B cell (primary cell): ENCODE measurements at regions of chr9 and their contacts with region 1.

Region 1: DNA sequence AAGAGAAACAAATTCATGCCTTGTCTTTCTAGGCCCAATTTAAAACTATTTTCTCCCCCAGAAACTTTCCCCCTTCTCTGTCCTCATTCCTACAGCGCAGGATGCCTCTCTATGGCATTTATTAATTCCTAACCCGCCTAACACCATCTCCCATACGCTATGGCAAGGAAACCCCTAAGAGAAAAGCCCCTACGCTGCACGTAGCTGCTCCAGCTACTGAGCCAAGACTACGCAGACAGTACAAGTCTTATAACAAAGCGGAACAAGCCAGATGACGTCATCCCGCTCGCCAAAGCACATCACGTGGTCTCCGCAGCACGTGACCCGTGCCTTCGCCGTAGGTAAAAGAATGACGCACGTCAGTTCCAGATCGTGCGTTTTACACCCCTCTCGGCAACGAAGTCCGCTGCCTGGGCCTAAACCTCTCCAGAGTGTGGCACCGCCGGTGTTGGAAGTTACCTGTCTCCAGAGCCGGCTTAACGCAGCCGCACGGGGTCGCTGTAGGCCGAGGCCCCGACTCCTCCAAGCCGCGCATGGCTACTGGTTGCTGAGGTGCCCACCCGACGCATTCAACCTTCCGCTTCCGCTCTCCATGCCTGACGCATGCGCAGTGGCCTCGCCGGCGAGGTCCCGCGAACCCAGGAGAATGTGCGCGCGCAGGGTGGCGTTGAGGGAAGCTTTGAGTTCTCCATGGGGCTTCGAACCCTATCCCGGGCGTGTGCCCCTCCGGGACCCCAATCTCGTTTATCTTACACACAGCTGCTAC is at the start of gene TRMO:
- DNase-seq: peak; percentile 100
- ATAC-seq: peak; percentile 78
- H3K4me3 ChIP-seq: peak within 1 kb of the TSS; percentile 47 to 89 (median 77)
- H3K4me3 Mint-ChIP-seq: peak within 1 kb of the TSS; percentile 87
- H3K27ac ChIP-seq: peak within 1 kb of the TSS; percentile 98 to 99
- H3K27ac Mint-ChIP-seq: peak within 1 kb of the TSS; percentile 97
- H3K4me1 ChIP-seq: peaks cover 26 to 32% of the 10 kb centered on the region in 2 donors
- H3K4me1 Mint-ChIP-seq: peaks cover 54% of the 10 kb centered on the region
- H3K27me3 ChIP-seq: no peaks in the 10 kb centered on the region
- H3K27me3 Mint-ChIP-seq: no peaks in the 10 kb centered on the region
- CTCF ChIP-seq: peak; percentile 74
- total RNA-seq, gene TRMO: 40.2 and 42.3 TPM in 2 replicates

Region 2: DNA sequence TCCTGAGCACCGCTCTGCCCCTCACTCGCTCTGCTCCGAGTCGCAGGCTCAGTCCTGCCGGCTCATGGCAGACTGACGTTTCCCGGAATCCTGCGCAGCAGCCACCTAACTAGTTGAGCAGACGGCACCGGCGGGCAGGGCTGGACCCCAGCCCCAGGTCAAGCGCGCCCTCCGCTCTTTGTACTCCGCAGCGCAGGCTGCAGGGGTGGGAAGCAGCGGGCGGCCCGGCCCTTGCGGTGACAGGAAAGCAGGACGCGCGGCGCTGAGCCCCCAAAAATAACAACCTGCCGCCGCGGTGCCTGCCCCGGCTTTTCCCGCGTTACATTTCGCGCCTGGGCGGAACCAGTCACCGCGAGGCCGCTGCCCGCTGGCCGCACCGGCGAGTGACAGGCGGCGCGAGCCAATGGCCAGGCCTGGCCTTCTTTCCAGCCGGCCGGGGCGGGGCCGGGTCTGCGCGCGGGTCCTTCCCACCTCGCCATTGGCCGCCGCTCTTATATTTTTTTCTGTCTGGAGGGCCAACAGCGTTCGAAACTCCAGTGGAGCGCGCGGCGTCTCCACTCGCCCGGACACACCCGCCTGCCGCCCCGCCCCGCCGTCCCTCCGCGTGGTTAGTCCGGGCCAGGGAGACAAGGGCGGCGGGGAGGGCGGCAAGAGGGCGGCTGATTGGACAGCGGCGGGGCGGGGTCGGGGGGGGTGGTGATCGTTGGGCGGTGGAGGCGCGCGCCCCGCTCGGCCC is 1503.9 kb before region 1 on chr9 and contains the start of gene ZNF367:
- CTCF ChIA-PET with region 1: no interaction called
- POLR2A ChIA-PET with region 1: no interaction called
- intact Hi-C with region 1: loop called (anchors 5 kb)
- DNase-seq: peak; percentile 95
- ATAC-seq: peak; percentile 73
- H3K4me3 ChIP-seq: peak within 1 kb of the TSS; percentile 53 to 100 (median 92)
- H3K4me3 Mint-ChIP-seq: peak within 1 kb of the TSS; percentile 97
- H3K27ac ChIP-seq: peak within 1 kb of the TSS; percentile 91 to 95
- H3K27ac Mint-ChIP-seq: peak within 1 kb of the TSS; percentile 97
- H3K4me1 ChIP-seq: peaks cover 36 to 47% of the 10 kb centered on the region in 2 donors
- H3K4me1 Mint-ChIP-seq: peaks cover 39% of the 10 kb centered on the region
- H3K27me3 ChIP-seq: no peaks in the 10 kb centered on the region
- H3K27me3 Mint-ChIP-seq: no peaks in the 10 kb centered on the region
- CTCF ChIP-seq: no peak
- total RNA-seq, gene ZNF367: 1.7 and 2.2 TPM in 2 replicates

Region 3: DNA sequence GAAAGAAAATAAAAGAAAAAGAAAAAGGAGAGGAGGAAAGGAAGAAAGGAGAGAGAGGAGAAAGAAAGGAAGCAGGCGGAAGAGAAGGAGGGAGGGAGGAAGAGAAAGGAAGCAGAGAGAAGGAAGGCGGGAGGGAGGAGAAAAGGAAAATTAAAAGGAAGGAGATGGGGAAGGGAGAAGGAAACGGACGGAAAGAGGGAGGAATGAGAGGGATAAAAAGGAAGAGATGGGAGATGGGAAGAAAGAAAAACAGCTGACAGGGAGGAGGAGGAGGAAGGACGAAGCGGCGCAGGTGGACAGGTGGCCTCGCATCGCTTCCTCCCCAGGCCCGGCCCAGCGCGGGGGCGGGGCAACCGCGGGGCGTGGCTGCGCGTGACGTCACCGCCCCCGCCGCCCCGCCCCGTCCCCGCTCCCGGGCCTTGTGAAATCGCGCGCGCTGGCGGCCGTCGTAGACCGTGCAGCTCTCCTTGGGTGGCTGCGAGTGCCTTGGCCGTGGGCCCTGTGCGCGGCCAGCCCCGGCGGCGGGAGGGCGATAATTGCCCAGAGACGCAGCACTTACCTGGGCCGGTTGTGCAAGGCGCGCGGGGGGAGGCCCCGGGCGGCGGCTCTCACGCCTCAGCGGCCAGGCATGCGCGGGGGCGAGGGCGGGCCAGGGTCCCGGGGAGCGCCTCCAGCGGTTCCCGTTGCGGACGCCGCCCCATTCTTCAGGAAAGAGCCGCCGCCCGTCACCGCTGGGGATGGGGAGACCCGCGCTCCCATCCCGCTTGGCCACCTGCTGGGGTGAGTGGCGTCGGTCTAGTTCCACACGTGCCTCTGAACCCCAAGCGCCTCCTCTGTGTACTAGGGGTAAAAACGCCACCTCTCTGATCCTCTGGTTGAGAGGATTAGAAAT is 118.7 kb before region 1 on chr9:
- CTCF ChIA-PET with region 1: no interaction called
- POLR2A ChIA-PET with region 1: no interaction called
- intact Hi-C with region 1: loop called (anchors 1 kb)
- DNase-seq: peak; percentile 84
- ATAC-seq: peak; percentile 94
- H3K4me3 ChIP-seq: peak overlapping the region in 4 of 5 experiments; percentile 36 to 64 (median 56)
- H3K4me3 Mint-ChIP-seq: peak overlapping the region; percentile 87
- H3K27ac ChIP-seq: no peak overlapping the region
- H3K27ac Mint-ChIP-seq: peak overlapping the region; percentile 20
- H3K4me1 ChIP-seq: peaks cover 7 to 9% of the 10 kb centered on the region in 2 donors
- H3K4me1 Mint-ChIP-seq: peaks cover 10% of the 10 kb centered on the region
- H3K27me3 ChIP-seq: peaks cover 0 to 20% (median 7%) of the 10 kb centered on the region in 4 experiments
- H3K27me3 Mint-ChIP-seq: peaks cover 30% of the 10 kb centered on the region
- CTCF ChIP-seq: peak; percentile 16

Region 4: DNA sequence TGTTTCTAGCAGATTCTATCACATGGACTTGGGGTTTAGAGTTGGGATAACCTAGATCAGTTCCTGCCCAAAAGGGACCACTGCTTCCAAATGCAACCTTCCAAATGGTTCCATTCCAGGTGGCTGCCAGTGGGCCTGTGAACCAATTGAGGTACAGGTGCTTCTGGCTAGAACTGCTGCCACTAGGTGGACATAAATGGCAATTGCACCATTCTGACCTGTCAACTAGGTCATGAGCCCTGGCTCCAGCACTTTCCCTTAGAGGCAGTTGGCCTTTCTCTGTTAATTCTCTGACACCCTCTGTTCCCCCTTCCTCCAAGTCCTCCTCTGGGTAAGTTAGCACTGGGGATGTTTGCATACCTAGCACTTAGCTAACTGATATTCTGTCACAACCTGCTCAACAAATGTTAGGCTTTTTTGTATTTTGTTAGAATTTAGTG is 32.4 kb after region 1 on chr9:
- CTCF ChIA-PET with region 1: interaction called, 50 read pairs
- POLR2A ChIA-PET with region 1: interaction called, 13 read pairs
- intact Hi-C with region 1: loop called (anchors 1 kb)
- DNase-seq: peak; percentile 68
- ATAC-seq: peak; percentile 73
- H3K4me3 ChIP-seq: no peak overlapping the region
- H3K4me3 Mint-ChIP-seq: no peak overlapping the region
- H3K27ac ChIP-seq: no peak overlapping the region
- H3K27ac Mint-ChIP-seq: no peak overlapping the region
- H3K4me1 ChIP-seq: no peaks in the 10 kb centered on the region
- H3K4me1 Mint-ChIP-seq: no peaks in the 10 kb centered on the region
- H3K27me3 ChIP-seq: peaks cover 0 to 6% (median 3%) of the 10 kb centered on the region in 4 experiments
- H3K27me3 Mint-ChIP-seq: peaks cover 15% of the 10 kb centered on the region
- CTCF ChIP-seq: peak; percentile 76

Region 5: GRCh38 chr9:98034593-98035546 is 112.7 kb after region 1 on chr9:
- CTCF ChIA-PET with region 1: interaction called, 45 read pairs
- POLR2A ChIA-PET with region 1: no interaction called
- intact Hi-C with region 1: loop called (anchors 1 kb)
- DNase-seq: peak; percentile 91
- ATAC-seq: peak; percentile 87
- H3K4me3 ChIP-seq: peak overlapping the region in 1 of 5 experiments; percentile 38
- H3K4me3 Mint-ChIP-seq: peak overlapping the region; percentile 53
- H3K27ac ChIP-seq: peak overlapping the region; percentile 1 to 34
- H3K27ac Mint-ChIP-seq: peak overlapping the region; percentile 57
- H3K4me1 ChIP-seq: peaks cover 10 to 25% of the 10 kb centered on the region in 2 donors
- H3K4me1 Mint-ChIP-seq: peaks cover 37% of the 10 kb centered on the region
- H3K27me3 ChIP-seq: no peaks in the 10 kb centered on the region
- H3K27me3 Mint-ChIP-seq: no peaks in the 10 kb centered on the region
- CTCF ChIP-seq: peak; percentile 78

Region 6: GRCh38 chr9:98192503-98193335 is 270.6 kb after region 1 on chr9 and contains the start of gene CORO2A:
- CTCF ChIA-PET with region 1: no interaction called
- POLR2A ChIA-PET with region 1: no interaction called
- intact Hi-C with region 1: loop called (anchors 2 kb)
- DNase-seq: peak; percentile 73
- ATAC-seq: peak; percentile 91
- H3K4me3 ChIP-seq: peak within 1 kb of the TSS; percentile 34 to 77 (median 67)
- H3K4me3 Mint-ChIP-seq: peak within 1 kb of the TSS; percentile 91
- H3K27ac ChIP-seq: no peak within 1 kb of the TSS
- H3K27ac Mint-ChIP-seq: peak within 1 kb of the TSS; percentile 71
- H3K4me1 ChIP-seq: peaks cover 8 to 18% of the 10 kb centered on the region in 2 donors
- H3K4me1 Mint-ChIP-seq: peaks cover 10% of the 10 kb centered on the region
- H3K27me3 ChIP-seq: peaks cover 0 to 12% (median 2%) of the 10 kb centered on the region in 4 experiments
- H3K27me3 Mint-ChIP-seq: no peaks in the 10 kb centered on the region
- CTCF ChIP-seq: peak; percentile 23
- total RNA-seq, gene CORO2A: 2.0 TPM in 2 replicates

Region 7: GRCh38 chr9:98215821-98216220 is 293.7 kb after region 1 on chr9:
- CTCF ChIA-PET with region 1: no interaction called
- POLR2A ChIA-PET with region 1: no interaction called
- intact Hi-C with region 1: no loop called
- DNase-seq: peak; percentile 22
- ATAC-seq: no peak
- H3K4me3 ChIP-seq: no peak overlapping the region
- H3K4me3 Mint-ChIP-seq: no peak overlapping the region
- H3K27ac ChIP-seq: no peak overlapping the region
- H3K27ac Mint-ChIP-seq: no peak overlapping the region
- H3K4me1 ChIP-seq: no peaks in the 10 kb centered on the region
- H3K4me1 Mint-ChIP-seq: no peaks in the 10 kb centered on the region
- H3K27me3 ChIP-seq: no peaks in the 10 kb centered on the region
- H3K27me3 Mint-ChIP-seq: no peaks in the 10 kb centered on the region
- CTCF ChIP-seq: no peak

Region 8: GRCh38 chr9:98610176-98610575 is 688.0 kb after region 1 on chr9:
- CTCF ChIA-PET with region 1: no interaction called
- POLR2A ChIA-PET with region 1: no interaction called
- intact Hi-C with region 1: no loop called
- DNase-seq: no peak
- ATAC-seq: no peak
- H3K4me3 ChIP-seq: no peak overlapping the region
- H3K4me3 Mint-ChIP-seq: no peak overlapping the region
- H3K27ac ChIP-seq: no peak overlapping the region
- H3K27ac Mint-ChIP-seq: no peak overlapping the region
- H3K4me1 ChIP-seq: no peaks in the 10 kb centered on the region
- H3K4me1 Mint-ChIP-seq: peaks cover 2% of the 10 kb centered on the region
- H3K27me3 ChIP-seq: no peaks in the 10 kb centered on the region
- H3K27me3 Mint-ChIP-seq: peaks cover 18% of the 10 kb centered on the region
- CTCF ChIP-seq: no peak